Adrenal gland (tissue), 19 donors: ENCODE measurements at regions of chr11 and their contacts with region 1.

Region 1: GRCh38 chr11:17221968-17222367 is 14.2 kb upstream of the PIK3C2A start:
- DNase-seq: no peak
- H3K4me3 ChIP-seq: no peak overlapping the region
- H3K27ac ChIP-seq: no peak overlapping the region
- H3K4me1 ChIP-seq: no peaks in the 10 kb centered on the region
- H3K27me3 ChIP-seq: no peaks in the 10 kb centered on the region
- CTCF ChIP-seq: no peak
- POLR2A ChIP-seq: no peak

Region 2: GRCh38 chr11:17036666-17037542 is 185.1 kb before region 1 on chr11:
- intact Hi-C with region 1: no loop called
- DNase-seq: no peak
- H3K4me3 ChIP-seq: no peak overlapping the region
- H3K27ac ChIP-seq: no peak overlapping the region
- H3K4me1 ChIP-seq: no peaks in the 10 kb centered on the region
- H3K27me3 ChIP-seq: no peaks in the 10 kb centered on the region
- CTCF ChIP-seq: no peak
- POLR2A ChIP-seq: no peak

Region 3: GRCh38 chr11:17145972-17146371 is 76.0 kb before region 1 on chr11:
- intact Hi-C with region 1: loop called in 1 of 2 experiments (anchors 10 kb)
- DNase-seq: no peak
- H3K4me3 ChIP-seq: no peak overlapping the region
- H3K27ac ChIP-seq: no peak overlapping the region
- H3K4me1 ChIP-seq: peaks cover 0 to 8% of the 10 kb centered on the region in 2 donors
- H3K27me3 ChIP-seq: no peaks in the 10 kb centered on the region
- CTCF ChIP-seq: no peak
- POLR2A ChIP-seq: no peak

Region 4: DNA sequence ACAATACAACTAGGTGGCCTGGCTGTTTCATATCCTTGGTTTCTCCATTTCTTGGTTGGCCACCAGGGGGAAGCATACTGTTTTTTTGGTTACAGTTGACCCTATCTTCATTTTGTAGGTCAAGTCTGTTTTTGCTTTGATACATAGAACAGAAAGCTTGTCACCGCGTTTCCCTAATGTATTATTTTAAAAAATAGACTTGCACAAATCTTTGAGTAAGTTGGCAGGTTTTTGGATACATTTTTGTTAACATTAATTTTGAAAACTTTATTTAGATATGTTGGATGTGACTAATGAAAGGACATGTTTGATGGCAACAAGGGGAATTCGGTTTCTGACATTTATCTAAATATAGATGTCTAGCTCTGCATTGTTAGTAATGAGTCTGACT is 132.6 kb after region 1 on chr11:
- intact Hi-C with region 1: loop called in 1 of 2 experiments (anchors 10 kb)
- DNase-seq: peak; percentile 63 to 87 (median 71)
- H3K4me3 ChIP-seq: no peak overlapping the region
- H3K27ac ChIP-seq: no peak overlapping the region
- H3K4me1 ChIP-seq: peaks cover 8 to 20% of the 10 kb centered on the region in 2 donors
- H3K27me3 ChIP-seq: no peaks in the 10 kb centered on the region
- CTCF ChIP-seq: peak; percentile 57 to 73 (median 70)
- POLR2A ChIP-seq: no peak

Region 5: GRCh38 chr11:17384002-17384511 is 162.1 kb after region 1 on chr11:
- intact Hi-C with region 1: loop called in 1 of 2 experiments (anchors 10 kb)
- DNase-seq: peak; percentile 77 to 89 (median 83)
- H3K4me3 ChIP-seq: no peak overlapping the region
- H3K27ac ChIP-seq: no peak overlapping the region
- H3K4me1 ChIP-seq: no peaks in the 10 kb centered on the region
- H3K27me3 ChIP-seq: no peaks in the 10 kb centered on the region
- CTCF ChIP-seq: peak; percentile 87 to 97 (median 92)
- POLR2A ChIP-seq: no peak

Region 6: GRCh38 chr11:17504330-17505107 is 282.6 kb after region 1 on chr11:
- intact Hi-C with region 1: loop called in 1 of 2 experiments (anchors 10 kb)
- DNase-seq: peak; percentile 80 to 95 (median 88)
- H3K4me3 ChIP-seq: no peak overlapping the region
- H3K27ac ChIP-seq: no peak overlapping the region
- H3K4me1 ChIP-seq: peaks cover 0 to 14% of the 10 kb centered on the region in 2 donors
- H3K27me3 ChIP-seq: no peaks in the 10 kb centered on the region
- CTCF ChIP-seq: peak; percentile 85 to 96 (median 94)
- POLR2A ChIP-seq: no peak